ENCODE measurements at regions of chr4 and their contacts with region 1.

Region 1: DNA sequence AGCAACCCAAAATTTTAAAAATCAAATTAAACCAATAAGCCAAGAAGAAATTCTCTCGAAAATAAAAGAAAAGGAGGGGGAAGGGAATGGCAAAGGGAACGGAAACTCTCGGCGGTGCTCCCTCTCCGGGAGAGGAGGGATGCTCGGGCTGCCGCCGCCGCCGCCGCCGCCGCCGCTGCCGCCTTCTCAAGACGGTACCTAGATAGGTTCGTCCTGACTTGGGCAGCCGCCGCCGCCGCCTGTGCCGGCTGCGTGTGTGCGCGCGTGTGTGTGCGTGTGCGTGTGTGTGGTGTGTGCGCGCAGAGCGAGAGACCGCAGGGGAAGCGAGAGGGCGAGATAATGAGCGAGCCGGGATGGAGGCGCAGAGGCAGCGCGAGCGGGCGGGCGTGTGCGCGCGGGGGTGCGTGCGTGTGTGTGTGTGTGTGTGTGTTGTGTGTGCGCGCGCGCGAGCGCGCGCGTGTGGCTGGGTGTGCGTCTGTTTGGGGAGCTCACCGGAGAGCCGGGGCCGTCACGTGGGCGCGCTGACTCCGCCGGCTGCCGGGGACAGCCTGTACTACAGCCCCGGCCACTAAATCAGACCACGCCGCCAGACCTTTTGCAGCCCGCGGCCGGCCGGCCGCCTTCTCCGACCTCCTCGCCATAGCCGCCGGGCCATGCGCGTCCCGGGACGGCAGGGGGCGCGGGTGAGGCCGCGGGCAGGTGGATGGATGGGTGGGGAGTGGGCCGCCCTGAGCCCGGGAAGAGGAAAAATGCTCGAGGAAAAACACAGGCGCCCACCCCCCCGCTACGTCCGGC is 111.6 kb downstream of the DHX15 start:
- DNase-seq: peak; percentile 45 to 79
- ATAC-seq: peak; percentile 66 to 76 (median 71)
- H3K4me3 ChIP-seq: peak overlapping the region; percentile 34
- H3K4me3 Mint-ChIP-seq: peak overlapping the region; percentile 93
- H3K27ac ChIP-seq: no peak overlapping the region
- H3K27ac Mint-ChIP-seq: peak overlapping the region; percentile 70 to 82
- H3K4me1 ChIP-seq: peaks cover 30% of the 10 kb centered on the region
- H3K4me1 Mint-ChIP-seq: peaks cover 37 to 39% of the 10 kb centered on the region in 2 donors
- H3K27me3 ChIP-seq: peaks cover 18% of the 10 kb centered on the region
- H3K27me3 Mint-ChIP-seq: peaks cover 54 to 58% of the 10 kb centered on the region in 2 donors
- CTCF ChIP-seq: no peak

Region 2: GRCh38 chr4:24584175-24584850 is 111.6 kb after region 1 on chr4 and contains the start of gene DHX15:
- intact Hi-C with region 1: loop called (anchors 5 kb)
- DNase-seq: peak; percentile 90 to 98
- ATAC-seq: peak; percentile 92 to 98 (median 95)
- H3K4me3 ChIP-seq: peak within 1 kb of the TSS; percentile 97
- H3K4me3 Mint-ChIP-seq: peak within 1 kb of the TSS; percentile 99
- H3K27ac ChIP-seq: peak within 1 kb of the TSS; percentile 96
- H3K27ac Mint-ChIP-seq: peak within 1 kb of the TSS; percentile 94 to 97
- H3K4me1 ChIP-seq: peaks cover 21% of the 10 kb centered on the region
- H3K4me1 Mint-ChIP-seq: peaks cover 37 to 40% of the 10 kb centered on the region in 2 donors
- H3K27me3 ChIP-seq: no peaks in the 10 kb centered on the region
- H3K27me3 Mint-ChIP-seq: no peaks in the 10 kb centered on the region
- CTCF ChIP-seq: no peak
- total RNA-seq, gene DHX15: 174 to 180 (median 179) TPM

Region 3: GRCh38 chr4:24642981-24643547 is 170.4 kb after region 1 on chr4:
- intact Hi-C with region 1: no loop called
- DNase-seq: no peak
- ATAC-seq: no peak
- H3K4me3 ChIP-seq: no peak overlapping the region
- H3K4me3 Mint-ChIP-seq: no peak overlapping the region
- H3K27ac ChIP-seq: no peak overlapping the region
- H3K27ac Mint-ChIP-seq: no peak overlapping the region
- H3K4me1 ChIP-seq: peaks cover 13% of the 10 kb centered on the region
- H3K4me1 Mint-ChIP-seq: peaks cover 27 to 32% of the 10 kb centered on the region in 2 donors
- H3K27me3 ChIP-seq: no peaks in the 10 kb centered on the region
- H3K27me3 Mint-ChIP-seq: no peaks in the 10 kb centered on the region
- CTCF ChIP-seq: no peak

Region 4: DNA sequence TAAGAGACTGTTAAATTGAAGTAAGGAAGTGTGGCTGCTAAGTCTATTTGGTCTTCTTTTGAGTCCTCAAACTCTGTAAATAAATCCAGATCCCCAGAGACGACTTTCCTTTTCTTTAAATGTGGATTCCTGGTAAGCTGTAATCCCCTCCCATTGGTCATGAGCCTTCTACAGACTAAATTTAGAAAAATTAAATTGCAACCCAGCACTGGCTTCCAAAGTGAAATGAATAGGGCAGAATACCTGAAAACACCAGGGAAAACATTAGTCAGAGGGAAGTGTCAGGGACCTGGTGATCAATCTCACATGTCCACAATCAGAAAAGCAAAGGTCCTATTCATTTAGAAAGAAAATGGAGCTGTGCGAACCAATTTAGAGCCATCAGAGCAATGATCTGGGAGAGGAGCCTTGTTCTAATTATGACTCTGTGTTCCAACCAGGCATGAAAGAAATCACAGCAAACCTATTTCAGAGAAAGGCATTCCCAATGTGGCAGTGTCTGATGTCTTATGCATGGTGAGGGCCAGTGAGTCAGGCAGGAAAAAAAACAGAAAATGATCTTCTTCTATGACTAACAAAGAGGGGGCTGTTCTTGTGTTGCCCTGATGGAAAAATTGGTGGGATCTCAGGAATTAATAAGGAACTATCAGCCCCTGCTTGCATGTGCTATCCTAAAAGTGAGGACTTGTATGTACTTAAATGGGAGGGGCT is 460.0 kb after region 1 on chr4:
- intact Hi-C with region 1: no loop called
- DNase-seq: no peak
- ATAC-seq: no peak
- H3K4me3 ChIP-seq: no peak overlapping the region
- H3K4me3 Mint-ChIP-seq: no peak overlapping the region
- H3K27ac ChIP-seq: no peak overlapping the region
- H3K27ac Mint-ChIP-seq: no peak overlapping the region
- H3K4me1 ChIP-seq: no peaks in the 10 kb centered on the region
- H3K4me1 Mint-ChIP-seq: no peaks in the 10 kb centered on the region
- H3K27me3 ChIP-seq: no peaks in the 10 kb centered on the region
- H3K27me3 Mint-ChIP-seq: peaks cover 0 to 7% of the 10 kb centered on the region in 2 donors
- CTCF ChIP-seq: no peak